GM10248 (cell line): ENCODE measurements at regions of chr1 and their contacts with region 1.

Region 1: DNA sequence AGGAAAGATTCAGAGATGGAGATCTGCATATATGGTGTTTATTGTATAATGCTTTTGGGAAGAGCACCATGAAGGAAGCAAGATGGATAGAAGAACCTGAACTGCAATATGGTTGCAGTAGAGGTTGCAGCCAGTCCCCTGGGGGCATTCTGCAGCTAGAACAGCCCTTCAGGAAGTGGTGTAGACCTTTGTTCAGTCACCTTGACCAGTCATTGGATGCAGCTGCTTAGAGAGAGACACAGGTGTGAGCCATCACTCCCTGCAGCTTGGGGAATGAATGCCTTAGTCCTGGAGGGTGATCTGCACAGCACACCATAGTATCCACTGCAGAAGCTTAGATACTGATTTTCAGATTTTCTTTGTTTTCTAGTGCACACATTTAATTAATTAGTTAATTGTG is 42.3 kb downstream of the NEK7 start:
- DNase-seq: no peak
- CTCF ChIP-seq: no peak

Region 2: GRCh38 chr1:198185759-198186158 is 13.3 kb before region 1 on chr1:
- CTCF ChIA-PET with region 1: interaction called, 15 read pairs
- POLR2A ChIA-PET with region 1: no interaction called
- DNase-seq: no peak
- CTCF ChIP-seq: no peak

Region 3: DNA sequence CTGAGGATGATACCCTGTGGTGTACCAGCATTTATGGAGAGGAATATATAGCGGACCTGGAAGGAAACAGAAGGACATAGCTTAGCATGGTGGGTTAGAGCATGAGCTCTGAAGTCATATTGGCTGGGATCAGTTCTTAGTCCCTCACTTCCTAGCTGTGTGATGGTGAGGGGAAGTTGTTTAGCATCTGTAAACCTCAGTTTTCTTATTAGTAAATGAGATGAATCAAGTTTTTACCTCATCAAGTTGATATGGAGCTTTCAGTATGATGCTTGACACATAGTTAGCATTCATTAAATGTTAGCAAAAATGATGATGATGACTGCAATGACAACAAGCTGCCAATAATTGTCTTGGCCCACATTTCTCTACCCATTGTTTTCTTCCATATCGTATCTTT is 42.4 kb after region 1 on chr1:
- CTCF ChIA-PET with region 1: no interaction called
- POLR2A ChIA-PET with region 1: no interaction called
- DNase-seq: no peak
- CTCF ChIP-seq: no peak

Region 4: DNA sequence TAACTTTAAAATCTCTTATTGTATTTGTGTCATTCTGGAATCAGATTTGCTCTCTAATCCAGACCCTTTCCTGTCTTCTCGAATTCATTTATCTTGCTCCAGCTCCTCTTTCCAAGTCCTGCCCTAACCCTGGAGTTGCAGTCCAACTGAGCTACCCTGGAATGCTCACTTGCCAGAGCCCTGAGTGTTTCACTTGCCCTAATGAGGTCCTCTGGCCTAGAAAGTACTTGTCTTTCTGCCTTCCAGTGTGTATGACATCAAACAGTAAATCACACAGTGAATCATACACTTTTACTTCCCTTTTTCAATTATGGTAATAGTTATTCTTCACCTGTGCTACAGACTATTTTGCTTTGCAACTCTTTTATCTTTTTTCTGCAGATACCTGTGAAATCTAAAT is 54.6 kb after region 1 on chr1:
- CTCF ChIA-PET with region 1: no interaction called
- POLR2A ChIA-PET with region 1: no interaction called
- DNase-seq: peak; percentile 53
- CTCF ChIP-seq: no peak